ENCODE measurements at regions of chr1 and their contacts with region 1.

Region 1: DNA sequence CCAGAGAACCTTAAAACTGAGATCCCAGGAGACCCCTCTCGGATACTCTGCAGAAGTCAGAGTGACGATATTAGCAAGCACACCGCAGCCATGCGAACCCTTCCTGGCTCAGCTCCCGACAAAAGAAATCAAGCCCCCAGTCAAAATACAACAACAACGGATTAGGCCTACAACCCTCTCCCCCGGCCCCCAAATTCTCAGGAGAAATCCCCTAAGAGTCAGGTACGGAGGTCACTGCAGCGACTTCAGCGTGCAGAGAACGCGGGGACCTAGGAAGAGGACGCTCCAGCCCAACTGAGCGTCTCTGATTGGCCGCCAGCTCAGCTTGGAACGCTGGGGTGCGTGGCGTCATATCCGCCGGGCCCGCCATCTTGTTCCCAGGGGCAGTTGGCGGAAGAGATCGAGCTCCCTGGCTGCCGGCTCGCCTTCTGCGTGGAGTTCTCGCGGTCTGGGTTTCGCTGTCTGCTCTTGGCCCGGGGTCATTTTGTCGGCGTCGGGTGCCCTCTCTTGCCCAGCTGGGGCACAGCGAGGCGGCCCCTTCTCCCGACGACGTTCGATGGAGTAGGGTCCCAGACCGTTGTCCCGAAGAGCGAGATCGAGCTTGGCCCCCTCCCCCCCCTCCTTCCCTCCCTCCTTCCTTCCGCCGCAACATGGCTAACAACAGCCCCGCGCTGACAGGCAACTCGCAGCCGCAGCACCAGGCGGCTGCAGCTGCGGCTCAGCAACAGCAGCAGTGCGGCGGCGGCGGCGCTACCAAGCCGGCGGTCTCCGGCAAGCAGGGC is at the start of gene PRPF38B:
- DNase-seq: peak; percentile 92
- H3K4me3 Mint-ChIP-seq: peak within 1 kb of the TSS; percentile 100
- H3K27ac Mint-ChIP-seq: peak within 1 kb of the TSS; percentile 100
- H3K4me1 Mint-ChIP-seq: peaks cover 44% of the 10 kb centered on the region
- H3K27me3 Mint-ChIP-seq: peaks cover 9% of the 10 kb centered on the region
- total RNA-seq, gene PRPF38B: 94.4 and 99.8 TPM in 2 replicates

Region 2: GRCh38 chr1:108512239-108512981 is 179.7 kb before region 1 on chr1:
- intact Hi-C with region 1: loop called (anchors 2 kb)
- DNase-seq: no peak
- H3K4me3 Mint-ChIP-seq: no peak overlapping the region
- H3K27ac Mint-ChIP-seq: no peak overlapping the region
- H3K4me1 Mint-ChIP-seq: no peaks in the 10 kb centered on the region
- H3K27me3 Mint-ChIP-seq: peaks cover 46% of the 10 kb centered on the region

Region 3: DNA sequence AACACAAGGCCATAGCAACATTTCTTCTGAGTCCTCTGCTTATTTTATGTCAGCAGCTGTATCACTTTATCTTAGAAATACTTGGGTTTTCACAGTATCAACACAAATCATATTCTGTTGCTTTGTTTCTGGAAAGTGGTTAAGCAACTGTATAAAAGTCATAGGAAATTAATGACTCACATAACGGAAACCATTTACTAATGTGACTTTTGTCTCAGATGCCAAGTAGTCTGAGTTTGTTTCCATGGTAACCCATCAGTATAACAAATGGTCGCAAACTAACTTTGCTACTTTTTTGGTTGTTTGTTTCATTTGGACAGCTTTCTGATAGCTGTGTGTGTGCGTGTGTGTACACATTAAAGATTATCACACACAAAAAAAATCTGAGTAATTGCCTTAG is 101.2 kb before region 1 on chr1:
- intact Hi-C with region 1: loop called (anchors 1 kb)
- DNase-seq: no peak
- H3K4me3 Mint-ChIP-seq: no peak overlapping the region
- H3K27ac Mint-ChIP-seq: peak overlapping the region; percentile 75
- H3K4me1 Mint-ChIP-seq: peaks cover 49% of the 10 kb centered on the region
- H3K27me3 Mint-ChIP-seq: peaks cover 2% of the 10 kb centered on the region

Region 4: GRCh38 chr1:108661030-108661620 is 31.0 kb before region 1 on chr1 and contains the start of gene HENMT1:
- intact Hi-C with region 1: loop called (anchors 1 kb)
- DNase-seq: peak; percentile 71
- H3K4me3 Mint-ChIP-seq: peak within 1 kb of the TSS; percentile 87
- H3K27ac Mint-ChIP-seq: peak within 1 kb of the TSS; percentile 97
- H3K4me1 Mint-ChIP-seq: peaks cover 49% of the 10 kb centered on the region
- H3K27me3 Mint-ChIP-seq: no peaks in the 10 kb centered on the region
- total RNA-seq, gene HENMT1: 17.9 and 20.7 TPM in 2 replicates

Region 5: DNA sequence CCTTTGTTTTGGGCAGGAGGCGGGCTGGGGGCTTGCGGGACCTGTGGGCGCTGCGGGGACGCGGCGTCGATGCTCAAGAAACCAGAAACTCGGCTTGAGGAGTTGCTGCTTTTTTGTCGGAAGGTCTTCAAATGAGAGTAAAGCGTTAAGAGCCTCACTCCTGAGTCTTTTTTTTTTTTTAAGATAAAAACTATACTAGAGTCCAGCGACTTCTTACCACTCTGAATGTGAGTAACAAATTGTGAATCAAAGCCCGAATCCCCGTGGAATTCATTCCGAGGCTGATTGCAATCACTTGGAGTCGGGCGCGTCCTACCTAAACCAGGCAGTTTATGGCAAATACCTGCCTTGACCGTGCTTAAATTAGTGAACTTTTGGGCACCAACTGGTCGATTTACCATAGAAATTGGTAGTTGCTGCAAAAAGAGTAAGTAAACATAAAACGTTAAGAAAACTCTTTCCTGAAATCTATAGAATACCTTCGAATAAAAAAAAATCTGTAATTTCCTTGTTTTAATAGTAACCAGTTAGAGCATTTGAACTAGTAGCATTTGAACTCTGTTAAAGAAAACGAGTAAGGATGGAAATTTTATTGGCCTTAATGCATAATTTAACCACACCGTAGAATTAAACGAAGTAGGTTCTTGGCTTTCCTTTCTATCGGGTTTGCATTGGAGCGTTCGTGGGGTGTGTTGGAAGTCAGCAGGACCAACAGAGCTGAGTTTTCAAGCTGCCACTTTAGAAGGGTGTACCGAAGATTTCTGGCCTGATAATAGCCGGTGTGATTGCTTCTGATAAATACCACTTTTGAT is 185.4 kb after region 1 on chr1:
- intact Hi-C with region 1: loop called (anchors 5 kb)
- DNase-seq: no peak
- H3K4me3 Mint-ChIP-seq: peak overlapping the region; percentile 89
- H3K27ac Mint-ChIP-seq: peak overlapping the region; percentile 48
- H3K4me1 Mint-ChIP-seq: peaks cover 45% of the 10 kb centered on the region
- H3K27me3 Mint-ChIP-seq: peaks cover 6% of the 10 kb centered on the region

Region 6: GRCh38 chr1:108963052-108963686 is 271.0 kb after region 1 on chr1 and contains the start of gene CLCC1:
- intact Hi-C with region 1: loop called (anchors 2 kb)
- DNase-seq: peak; percentile 93
- H3K4me3 Mint-ChIP-seq: peak within 1 kb of the TSS; percentile 89
- H3K27ac Mint-ChIP-seq: peak within 1 kb of the TSS; percentile 94
- H3K4me1 Mint-ChIP-seq: peaks cover 26% of the 10 kb centered on the region
- H3K27me3 Mint-ChIP-seq: peaks cover 4% of the 10 kb centered on the region
- total RNA-seq, gene CLCC1: 23.1 and 23.4 TPM in 2 replicates

Region 7: GRCh38 chr1:109090196-109091077 is 398.3 kb after region 1 on chr1 and contains the start of gene TMEM167B:
- intact Hi-C with region 1: loop called (anchors 2 kb)
- DNase-seq: peak; percentile 84
- H3K4me3 Mint-ChIP-seq: peak within 1 kb of the TSS; percentile 92
- H3K27ac Mint-ChIP-seq: peak within 1 kb of the TSS; percentile 93
- H3K4me1 Mint-ChIP-seq: peaks cover 21% of the 10 kb centered on the region
- H3K27me3 Mint-ChIP-seq: peaks cover 2% of the 10 kb centered on the region
- total RNA-seq, gene TMEM167B: 26.2 and 27.6 TPM in 2 replicates

Measured in activated T-helper 1 cell treated with anti-CD3 and anti-CD28 coated beads, Interleukin-12 subunit alpha, Interleukin-12 subunit beta, Interleukin-2, Interleukin-4 antibody, amounts not matched to agents 30 ng/mL and 10 ng/mL and 1 ng/mL, durations not matched to agents 14 hours and 24 hours and 36 hours (primary cell).